ENCODE measurements at regions of chr15 and their contacts with region 1.

Region 1: GRCh38 chr15:89057504-89058133 is 30.6 kb upstream of the ABHD2 start:
- DNase-seq: peak; percentile 80

Region 2: GRCh38 chr15:89105147-89105546 is 47.5 kb after region 1 on chr15:
- in situ Hi-C with region 1: loop called (anchors 5 kb)
- DNase-seq: no peak

Region 3: DNA sequence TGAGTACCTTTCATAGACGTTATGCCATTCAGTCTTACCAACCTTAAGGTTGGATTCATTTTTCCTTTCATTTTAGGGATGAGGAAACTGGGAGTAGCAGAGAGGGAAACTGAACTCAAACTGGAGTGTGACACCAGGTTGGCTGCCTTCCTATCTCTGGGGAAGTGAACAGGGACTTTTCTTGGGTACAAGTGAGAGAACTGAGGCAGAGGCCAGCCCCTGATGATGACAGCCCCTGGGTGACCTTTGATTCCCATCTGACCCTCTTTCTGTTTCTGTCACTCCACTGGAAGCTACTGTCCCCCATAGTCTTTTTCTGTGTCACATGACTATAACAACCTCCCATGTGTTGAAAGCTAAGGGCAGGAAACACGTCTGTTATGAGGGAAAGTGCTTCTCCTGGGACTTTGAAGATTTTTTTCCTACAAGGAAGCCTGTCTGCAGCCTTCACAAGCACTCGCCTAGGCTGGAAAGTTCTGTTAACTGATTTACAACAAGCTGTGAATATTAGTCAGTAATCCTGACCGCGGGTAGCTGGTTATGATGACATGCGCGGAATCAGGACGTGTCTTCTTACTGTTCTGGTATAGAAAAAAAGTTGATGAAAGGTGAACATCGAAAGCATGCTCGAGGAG is 62.0 kb after region 1 on chr15:
- in situ Hi-C with region 1: no loop called
- DNase-seq: no peak

Measured in G401 (cell line).